ENCODE measurements at regions of chr11 and their contacts with region 1.

Region 1: GRCh38 chr11:100676901-100677300 is 10.2 kb upstream of the ARHGAP42 start:
- DNase-seq: no peak
- H3K4me3 ChIP-seq: no peak overlapping the region
- H3K27ac ChIP-seq: no peak overlapping the region
- H3K4me1 ChIP-seq: peaks cover 0 to 9% (median 0%) of the 10 kb centered on the region in 3 donors
- H3K27me3 ChIP-seq: no peaks in the 10 kb centered on the region
- CTCF ChIP-seq: no peak
- POLR2A ChIP-seq: no peak

Region 2: DNA sequence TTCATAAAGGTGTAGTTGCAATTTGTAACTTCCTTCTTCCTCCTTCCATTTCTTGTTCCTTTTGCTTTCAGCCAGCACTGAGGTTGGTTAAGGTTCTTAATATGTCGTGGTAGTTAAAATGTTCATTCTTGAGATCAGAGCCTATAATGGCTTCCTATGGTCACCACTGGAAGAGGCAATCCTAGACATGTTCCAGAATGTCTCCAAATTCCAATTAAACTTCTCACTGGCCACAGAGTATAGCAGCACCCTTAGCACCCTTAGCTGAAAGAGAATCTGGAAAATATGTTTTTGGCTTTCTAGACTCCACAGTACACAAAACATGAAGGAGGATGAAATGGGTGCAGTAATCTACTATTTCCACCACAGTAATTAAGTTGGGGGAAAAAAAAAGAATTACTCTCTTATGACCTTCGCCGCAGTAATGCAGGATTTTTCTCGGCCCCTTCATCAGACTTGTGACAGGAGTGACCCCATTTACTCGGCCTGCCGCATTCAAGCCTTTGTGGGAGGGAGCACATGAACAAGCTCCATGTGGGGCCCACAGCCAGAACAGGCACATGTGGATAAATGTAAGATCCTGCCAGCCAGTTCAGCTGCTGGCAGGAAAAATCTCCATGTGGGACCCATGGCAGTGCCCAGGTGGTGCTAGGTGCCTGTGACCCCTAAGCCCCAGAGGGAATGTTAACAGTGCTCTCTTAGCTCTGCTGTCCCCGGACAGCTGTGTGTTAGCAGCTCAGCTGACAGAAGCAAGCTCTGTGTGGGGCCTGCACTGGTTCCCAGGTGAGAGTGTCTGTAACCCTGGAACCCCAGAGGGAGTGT is 338.5 kb before region 1 on chr11:
- intact Hi-C with region 1: no loop called
- DNase-seq: no peak
- H3K4me3 ChIP-seq: no peak overlapping the region
- H3K27ac ChIP-seq: no peak overlapping the region
- H3K4me1 ChIP-seq: peaks cover 0 to 12% (median 0%) of the 10 kb centered on the region in 3 donors
- H3K27me3 ChIP-seq: no peaks in the 10 kb centered on the region
- CTCF ChIP-seq: no peak
- POLR2A ChIP-seq: no peak

Region 3: GRCh38 chr11:100562128-100562527 is 114.8 kb before region 1 on chr11:
- intact Hi-C with region 1: no loop called
- DNase-seq: no peak
- H3K4me3 ChIP-seq: no peak overlapping the region
- H3K27ac ChIP-seq: peak overlapping the region in 1 of 4 donors; percentile 23
- H3K4me1 ChIP-seq: peaks cover 0 to 38% (median 8%) of the 10 kb centered on the region in 3 donors
- H3K27me3 ChIP-seq: no peaks in the 10 kb centered on the region
- CTCF ChIP-seq: no peak
- POLR2A ChIP-seq: no peak

Region 4: DNA sequence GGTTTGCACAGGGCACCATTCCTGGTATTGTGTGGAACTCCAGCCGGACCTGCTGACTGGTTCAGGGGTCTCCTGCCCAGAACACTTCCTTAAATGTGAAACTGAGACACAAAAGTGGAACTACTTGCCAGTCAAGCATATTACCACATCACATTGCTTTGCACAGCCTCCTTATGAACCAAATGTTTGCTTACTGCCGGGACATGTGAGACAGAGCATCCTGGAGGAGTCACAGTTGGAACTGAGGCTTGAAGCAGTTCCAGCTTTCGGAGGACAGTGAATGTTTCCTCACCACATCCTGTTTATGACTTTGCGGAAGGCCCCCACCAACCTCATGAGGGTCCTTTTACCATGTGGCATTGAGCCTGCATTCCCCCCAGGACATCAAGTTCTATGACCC is 95.6 kb before region 1 on chr11:
- intact Hi-C with region 1: loop called (anchors 10 kb)
- DNase-seq: no peak
- H3K4me3 ChIP-seq: no peak overlapping the region
- H3K27ac ChIP-seq: no peak overlapping the region
- H3K4me1 ChIP-seq: peaks cover 0 to 12% (median 0%) of the 10 kb centered on the region in 3 donors
- H3K27me3 ChIP-seq: no peaks in the 10 kb centered on the region
- CTCF ChIP-seq: no peak
- POLR2A ChIP-seq: no peak

Region 5: DNA sequence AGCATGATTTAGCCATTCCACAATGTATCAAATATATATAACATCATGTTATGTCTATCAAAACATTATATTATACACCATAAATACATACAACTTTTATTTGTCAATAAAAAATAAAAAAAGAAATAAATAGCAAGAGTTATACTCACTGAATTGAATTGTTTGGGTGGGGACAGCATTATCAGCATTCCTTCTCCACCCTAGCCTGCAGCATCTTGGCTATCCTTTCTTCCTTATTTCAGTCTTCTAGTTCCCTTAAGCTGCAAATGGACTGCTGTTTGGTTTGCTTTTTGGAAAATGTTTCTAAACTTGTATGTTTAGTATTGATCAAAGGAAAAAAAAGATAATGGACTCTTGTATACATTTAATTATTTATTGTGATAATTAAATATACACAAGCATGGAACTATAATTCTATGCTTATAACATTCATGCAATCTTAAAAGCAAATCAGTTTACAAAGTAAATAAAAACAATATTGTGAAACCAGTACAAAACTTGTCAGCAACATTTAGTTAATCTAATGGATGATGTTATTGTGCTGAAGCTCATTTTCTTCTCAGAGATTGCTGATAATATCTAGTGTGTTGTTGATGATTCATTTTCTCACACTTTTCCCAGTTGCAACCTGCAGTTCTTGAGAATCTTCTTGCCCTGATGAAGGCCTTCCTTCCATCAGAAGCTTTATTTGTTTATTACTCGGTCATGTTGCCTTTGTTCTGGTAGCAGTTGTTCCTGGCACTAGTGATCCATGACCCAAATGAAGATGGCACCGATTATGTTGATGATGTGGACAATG is 15.2 kb after region 1 on chr11:
- intact Hi-C with region 1: no loop called
- DNase-seq: no peak
- H3K4me3 ChIP-seq: no peak overlapping the region
- H3K27ac ChIP-seq: no peak overlapping the region
- H3K4me1 ChIP-seq: peaks cover 0 to 38% (median 4%) of the 10 kb centered on the region in 3 donors
- H3K27me3 ChIP-seq: no peaks in the 10 kb centered on the region
- CTCF ChIP-seq: no peak
- POLR2A ChIP-seq: no peak

Region 6: GRCh38 chr11:100830978-100831732 is 154.3 kb after region 1 on chr11:
- intact Hi-C with region 1: no loop called
- DNase-seq: no peak
- H3K4me3 ChIP-seq: no peak overlapping the region
- H3K27ac ChIP-seq: peak overlapping the region in 1 of 4 donors; percentile 42
- H3K4me1 ChIP-seq: peaks cover 0 to 44% (median 9%) of the 10 kb centered on the region in 3 donors
- H3K27me3 ChIP-seq: no peaks in the 10 kb centered on the region
- CTCF ChIP-seq: no peak
- POLR2A ChIP-seq: no peak